ENCODE measurements at regions of chr1 and their contacts with region 1.

Region 1: DNA sequence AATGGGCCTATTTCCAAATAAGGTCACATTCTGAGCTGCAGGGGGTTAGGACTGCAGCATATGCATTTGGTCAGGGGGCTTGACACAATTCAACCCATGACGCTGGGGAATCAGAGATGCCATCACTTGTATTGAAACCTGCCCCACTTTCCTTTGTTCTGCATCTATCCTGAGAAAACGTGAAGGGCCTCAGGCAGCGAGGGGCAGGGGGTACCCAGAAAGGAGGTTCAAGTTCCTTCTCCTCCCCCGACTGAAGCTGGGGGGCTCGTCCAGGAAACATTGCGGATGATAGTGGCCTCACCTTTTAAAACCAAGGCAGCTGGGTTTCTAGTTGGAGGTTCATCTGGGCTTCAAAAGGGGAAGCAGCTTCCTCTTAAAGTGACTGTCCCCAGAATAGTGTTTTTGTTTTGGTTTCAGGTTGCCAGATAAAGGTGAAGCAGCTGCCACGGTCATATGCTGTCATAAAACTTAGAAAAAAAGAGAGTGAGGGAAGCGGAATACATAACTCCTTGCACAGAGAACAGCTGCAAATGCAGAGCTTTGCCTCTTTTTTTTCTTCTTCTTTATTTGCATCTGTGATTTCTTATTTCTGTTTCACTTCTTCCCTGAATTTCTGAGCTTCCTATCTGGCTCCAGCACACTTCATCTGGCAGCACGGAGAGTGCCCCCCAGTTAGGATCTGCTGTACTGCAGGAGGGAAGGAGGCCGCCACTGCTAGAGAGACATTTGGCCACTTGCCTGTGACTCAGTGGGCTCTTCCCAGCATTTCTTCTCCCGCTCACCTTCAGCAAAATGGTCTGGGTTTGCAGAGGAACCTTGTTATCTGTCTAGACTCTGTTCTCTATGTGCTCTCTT is 142.0 kb downstream of the AJAP1 start:
- DNase-seq: peak; percentile 89
- H3K4me3 ChIP-seq: peak overlapping the region; percentile 38
- H3K27ac ChIP-seq: peak overlapping the region; percentile 87
- H3K4me1 ChIP-seq: peaks cover 45% of the 10 kb centered on the region
- CTCF ChIP-seq: peak; percentile 66

Region 2: GRCh38 chr1:5108725-5109124 is 312.3 kb after region 1 on chr1:
- CTCF ChIA-PET with region 1: no interaction called
- POLR2A ChIA-PET with region 1: no interaction called
- intact Hi-C with region 1: no loop called
- DNase-seq: no peak
- H3K4me3 ChIP-seq: no peak overlapping the region
- H3K27ac ChIP-seq: no peak overlapping the region
- H3K4me1 ChIP-seq: no peaks in the 10 kb centered on the region
- CTCF ChIP-seq: no peak

Region 3: DNA sequence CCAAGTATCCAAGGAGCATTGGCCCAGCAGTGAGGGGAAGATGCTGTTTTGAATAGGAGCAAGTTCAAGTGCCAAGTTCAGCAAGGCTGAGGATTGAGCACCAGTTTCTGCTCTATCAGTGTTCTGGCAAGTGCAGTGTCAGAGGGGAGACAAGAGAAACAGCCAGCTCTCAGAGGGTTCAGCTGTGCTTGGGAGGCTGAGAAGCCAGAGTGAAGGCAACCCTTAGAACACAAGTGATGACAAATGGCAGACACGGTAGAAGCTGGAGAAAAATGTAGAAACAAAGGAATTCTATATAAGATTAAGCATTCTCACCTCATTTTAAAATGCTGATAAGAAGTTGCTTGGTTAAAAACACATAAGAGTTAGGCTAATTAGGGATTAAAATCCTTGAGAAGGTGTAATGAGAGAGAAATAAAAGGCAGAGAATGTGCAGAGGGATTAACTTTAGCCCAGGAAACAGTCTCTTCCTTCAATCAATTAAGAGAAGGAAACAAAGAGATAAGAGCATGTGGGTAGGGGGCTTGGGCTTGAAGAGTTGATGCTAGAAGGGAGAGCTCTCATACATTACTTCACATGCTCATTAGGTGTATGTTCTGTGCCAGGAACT is 333.5 kb after region 1 on chr1:
- CTCF ChIA-PET with region 1: no interaction called
- POLR2A ChIA-PET with region 1: no interaction called
- intact Hi-C with region 1: no loop called
- DNase-seq: no peak
- H3K4me3 ChIP-seq: no peak overlapping the region
- H3K27ac ChIP-seq: no peak overlapping the region
- H3K4me1 ChIP-seq: no peaks in the 10 kb centered on the region
- CTCF ChIP-seq: no peak

Region 4: DNA sequence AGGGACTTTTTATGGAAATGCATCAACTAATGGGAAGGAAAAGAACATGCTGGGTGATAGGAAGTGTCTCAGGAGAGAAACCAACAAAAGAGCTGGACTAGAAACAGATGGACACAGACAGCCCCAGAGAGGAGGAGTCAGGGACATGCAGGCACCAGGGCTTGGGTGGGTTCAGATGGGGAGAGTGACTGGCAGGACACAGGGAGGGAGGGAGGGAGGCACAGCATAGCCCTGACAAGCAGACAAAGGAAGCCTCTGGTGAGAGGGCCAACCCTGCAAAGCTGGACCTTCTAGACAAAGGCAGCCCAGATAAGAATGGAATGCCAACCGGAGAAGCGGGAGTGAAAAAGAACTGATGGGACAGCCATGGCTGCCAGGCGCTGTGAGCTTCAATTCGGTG is 426.8 kb after region 1 on chr1:
- CTCF ChIA-PET with region 1: no interaction called
- POLR2A ChIA-PET with region 1: interaction called, 3 read pairs
- intact Hi-C with region 1: loop called (anchors 10 kb)
- DNase-seq: no peak
- H3K4me3 ChIP-seq: no peak overlapping the region
- H3K27ac ChIP-seq: peak overlapping the region; percentile 99
- H3K4me1 ChIP-seq: peaks cover 71% of the 10 kb centered on the region
- CTCF ChIP-seq: no peak

Measured in OCI-LY7 (cell line).